T-cell (primary cell): ENCODE measurements at regions of chr1 and their contacts with region 1.

Region 1: DNA sequence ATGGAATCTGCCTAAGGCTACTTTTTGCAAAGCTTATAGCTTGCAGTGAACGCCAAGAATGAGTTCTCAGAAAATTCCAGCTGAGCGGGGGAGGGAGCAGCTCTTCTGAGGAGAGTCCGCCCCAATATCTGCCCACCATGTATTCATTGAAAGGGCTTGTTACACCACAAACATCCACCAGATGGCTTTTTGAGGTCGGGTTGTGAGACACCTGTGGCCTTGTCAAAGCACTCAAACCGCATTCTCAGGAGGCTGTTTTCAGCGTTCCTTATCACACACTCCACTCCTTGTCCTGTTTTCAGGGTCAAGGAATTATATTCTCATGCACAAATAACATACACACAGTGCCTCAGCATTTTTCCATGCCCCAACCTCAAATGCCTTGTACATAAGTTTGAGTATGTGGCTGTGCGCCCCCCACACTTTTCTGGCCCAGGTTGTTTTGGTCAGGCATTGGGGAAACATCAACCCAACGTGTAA is 3.9 kb upstream of the C4BPB start:
- DNase-seq: peak; percentile 9 to 80 (median 42)
- ATAC-seq: peak; percentile 54 to 83 (median 80)
- H3K4me3 ChIP-seq: no peak overlapping the region
- H3K4me3 Mint-ChIP-seq: no peak overlapping the region
- H3K27ac ChIP-seq: no peak overlapping the region
- H3K27ac Mint-ChIP-seq: no peak overlapping the region
- H3K4me1 ChIP-seq: peaks cover 4 to 9% of the 10 kb centered on the region in 2 experiments
- H3K4me1 Mint-ChIP-seq: peaks cover 22 to 29% (median 26%) of the 10 kb centered on the region in 3 donors
- H3K27me3 ChIP-seq: peaks cover 0 to 4% of the 10 kb centered on the region in 2 experiments
- H3K27me3 Mint-ChIP-seq: peaks cover 3 to 29% of the 10 kb centered on the region in 2 donors

Region 2: DNA sequence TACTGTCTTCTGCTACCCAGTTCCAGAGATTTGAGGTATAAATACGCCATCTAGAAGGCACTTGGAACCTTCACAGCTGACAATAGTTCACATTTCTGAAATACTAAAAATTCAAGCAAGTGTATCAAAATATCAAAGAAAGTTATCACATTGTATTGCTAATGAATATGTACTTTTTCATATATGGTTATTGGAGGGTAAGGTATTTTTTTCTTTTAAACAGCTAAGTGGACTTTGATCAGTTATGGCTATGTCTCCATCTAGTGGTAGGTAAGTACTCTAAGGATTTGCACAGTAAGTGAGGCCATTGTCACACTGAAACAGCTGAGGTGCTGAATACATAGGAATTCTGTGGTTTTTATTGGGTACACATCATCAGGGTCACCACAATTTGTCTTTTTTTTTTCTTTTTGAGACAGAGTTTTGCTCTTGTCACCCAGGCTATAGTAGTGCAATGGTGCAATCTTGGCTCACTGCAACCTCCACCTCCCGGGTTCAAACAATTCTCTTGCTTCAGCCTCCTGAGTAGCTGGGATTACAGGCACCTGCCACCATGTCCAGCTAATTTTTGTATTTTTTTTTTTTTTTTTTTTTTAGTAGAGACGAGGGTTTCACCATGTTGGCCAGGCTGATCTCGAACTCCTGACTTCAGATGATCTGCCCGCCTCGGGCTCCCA is 320.2 kb after region 1 on chr1:
- CTCF ChIA-PET with region 1: interaction called, 20 to 35 read pairs
- POLR2A ChIA-PET with region 1: no interaction called
- DNase-seq: peak in 4 of 35 experiments; percentile 6 to 75 (median 8)
- ATAC-seq: peak; percentile 65 to 83 (median 70)
- H3K4me3 ChIP-seq: no peak overlapping the region
- H3K4me3 Mint-ChIP-seq: no peak overlapping the region
- H3K27ac ChIP-seq: no peak overlapping the region
- H3K27ac Mint-ChIP-seq: no peak overlapping the region
- H3K4me1 ChIP-seq: no peaks in the 10 kb centered on the region
- H3K4me1 Mint-ChIP-seq: no peaks in the 10 kb centered on the region
- H3K27me3 ChIP-seq: no peaks in the 10 kb centered on the region
- H3K27me3 Mint-ChIP-seq: no peaks in the 10 kb centered on the region

Region 3: GRCh38 chr1:207499573-207499972 is 414.8 kb after region 1 on chr1:
- CTCF ChIA-PET with region 1: interaction called, 7 to 15 read pairs
- POLR2A ChIA-PET with region 1: no interaction called
- DNase-seq: peak; percentile 35 to 86 (median 64)
- ATAC-seq: peak; percentile 61 to 81 (median 68)
- H3K4me3 ChIP-seq: no peak overlapping the region
- H3K4me3 Mint-ChIP-seq: no peak overlapping the region
- H3K27ac ChIP-seq: no peak overlapping the region
- H3K27ac Mint-ChIP-seq: no peak overlapping the region
- H3K4me1 ChIP-seq: peaks cover 2 to 11% of the 10 kb centered on the region in 2 experiments
- H3K4me1 Mint-ChIP-seq: peaks cover 7 to 26% (median 16%) of the 10 kb centered on the region in 3 donors
- H3K27me3 ChIP-seq: peaks cover 0 to 12% of the 10 kb centered on the region in 2 experiments
- H3K27me3 Mint-ChIP-seq: peaks cover 19 to 34% of the 10 kb centered on the region in 2 donors